ENCODE measurements at regions of chr22 and their contacts with region 1.

Region 1: GRCh38 chr22:41940832-41941765 is 5.9 kb downstream of the CENPM start:
- DNase-seq: peak; percentile 86 to 90 (median 89)
- H3K4me3 ChIP-seq: peak overlapping the region in 1 of 2 donors; percentile 41
- H3K4me3 Mint-ChIP-seq: peak overlapping the region; percentile 66 to 98 (median 92)
- H3K27ac ChIP-seq: peak overlapping the region; percentile 95
- H3K27ac Mint-ChIP-seq: peak overlapping the region; percentile 98 to 100 (median 100)
- H3K4me1 ChIP-seq: peaks cover 40% of the 10 kb centered on the region
- H3K4me1 Mint-ChIP-seq: peaks cover 36 to 61% (median 44%) of the 10 kb centered on the region in 4 donors
- H3K27me3 ChIP-seq: no peaks in the 10 kb centered on the region
- H3K27me3 Mint-ChIP-seq: no peaks in the 10 kb centered on the region

Region 2: DNA sequence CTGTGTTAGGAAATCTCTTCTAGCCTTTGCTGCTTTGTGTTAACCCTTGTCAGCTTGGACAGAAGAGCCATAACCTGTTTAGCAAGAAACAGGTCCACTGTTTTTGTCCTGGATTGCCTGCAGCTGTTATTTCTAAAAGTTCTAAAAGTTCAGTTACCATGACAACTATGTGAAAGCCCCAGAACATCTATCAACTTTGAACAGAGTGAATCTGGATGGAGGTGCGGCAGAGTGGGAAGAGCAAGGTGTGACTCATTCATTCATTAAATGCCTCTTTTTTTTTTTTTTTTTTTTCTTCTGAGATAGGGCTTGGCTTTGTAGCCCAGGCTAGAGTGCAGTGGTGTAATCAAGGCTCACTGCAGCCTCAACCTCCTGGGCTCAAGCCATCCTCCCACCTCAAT is 939.4 kb before region 1 on chr22:
- CTCF ChIA-PET with region 1: no interaction called
- POLR2A ChIA-PET with region 1: no interaction called
- intact Hi-C with region 1: no loop called
- DNase-seq: no peak
- H3K4me3 ChIP-seq: no peak overlapping the region
- H3K4me3 Mint-ChIP-seq: no peak overlapping the region
- H3K27ac ChIP-seq: no peak overlapping the region
- H3K27ac Mint-ChIP-seq: no peak overlapping the region
- H3K4me1 ChIP-seq: no peaks in the 10 kb centered on the region
- H3K4me1 Mint-ChIP-seq: no peaks in the 10 kb centered on the region
- H3K27me3 ChIP-seq: no peaks in the 10 kb centered on the region
- H3K27me3 Mint-ChIP-seq: no peaks in the 10 kb centered on the region

Region 3: GRCh38 chr22:41656556-41656955 is 284.5 kb before region 1 on chr22:
- CTCF ChIA-PET with region 1: no interaction called
- POLR2A ChIA-PET with region 1: no interaction called
- intact Hi-C with region 1: no loop called
- DNase-seq: no peak
- H3K4me3 ChIP-seq: no peak overlapping the region
- H3K4me3 Mint-ChIP-seq: no peak overlapping the region
- H3K27ac ChIP-seq: no peak overlapping the region
- H3K27ac Mint-ChIP-seq: peak overlapping the region in 1 of 7 donors; percentile 48
- H3K4me1 ChIP-seq: no peaks in the 10 kb centered on the region
- H3K4me1 Mint-ChIP-seq: peaks cover 0 to 2% (median 0%) of the 10 kb centered on the region in 4 donors
- H3K27me3 ChIP-seq: no peaks in the 10 kb centered on the region
- H3K27me3 Mint-ChIP-seq: no peaks in the 10 kb centered on the region

Region 4: GRCh38 chr22:41666661-41667258 is 274.3 kb before region 1 on chr22:
- CTCF ChIA-PET with region 1: interaction called, 24 read pairs
- POLR2A ChIA-PET with region 1: interaction called, 21 read pairs
- intact Hi-C with region 1: no loop called
- DNase-seq: peak; percentile 91 to 97 (median 96)
- H3K4me3 ChIP-seq: peak overlapping the region in 1 of 2 donors; percentile 39
- H3K4me3 Mint-ChIP-seq: peak overlapping the region; percentile 86 to 94 (median 88)
- H3K27ac ChIP-seq: peak overlapping the region; percentile 80
- H3K27ac Mint-ChIP-seq: peak overlapping the region; percentile 97 to 99 (median 98)
- H3K4me1 ChIP-seq: peaks cover 14% of the 10 kb centered on the region
- H3K4me1 Mint-ChIP-seq: peaks cover 4 to 14% (median 11%) of the 10 kb centered on the region in 4 donors
- H3K27me3 ChIP-seq: no peaks in the 10 kb centered on the region
- H3K27me3 Mint-ChIP-seq: no peaks in the 10 kb centered on the region

Region 5: GRCh38 chr22:41697126-41697775 is 243.8 kb before region 1 on chr22:
- CTCF ChIA-PET with region 1: interaction called, 143 read pairs
- POLR2A ChIA-PET with region 1: interaction called, 73 read pairs
- intact Hi-C with region 1: loop called (anchors 1 kb)
- DNase-seq: peak; percentile 81 to 87 (median 83)
- H3K4me3 ChIP-seq: no peak overlapping the region
- H3K4me3 Mint-ChIP-seq: peak overlapping the region; percentile 50 to 84 (median 74)
- H3K27ac ChIP-seq: peak overlapping the region; percentile 2
- H3K27ac Mint-ChIP-seq: peak overlapping the region in 6 of 7 donors; percentile 51 to 88 (median 80)
- H3K4me1 ChIP-seq: peaks cover 14% of the 10 kb centered on the region
- H3K4me1 Mint-ChIP-seq: peaks cover 9 to 21% (median 13%) of the 10 kb centered on the region in 4 donors
- H3K27me3 ChIP-seq: no peaks in the 10 kb centered on the region
- H3K27me3 Mint-ChIP-seq: no peaks in the 10 kb centered on the region

Region 6: GRCh38 chr22:41800348-41801146 is 140.6 kb before region 1 on chr22 and contains the start of gene CCDC134:
- CTCF ChIA-PET with region 1: interaction called, 17 read pairs
- POLR2A ChIA-PET with region 1: interaction called, 83 read pairs
- intact Hi-C with region 1: loop called (anchors 1 kb)
- DNase-seq: peak; percentile 89 to 93 (median 93)
- H3K4me3 ChIP-seq: peak within 1 kb of the TSS; percentile 91 to 92
- H3K4me3 Mint-ChIP-seq: peak within 1 kb of the TSS; percentile 91 to 98 (median 96)
- H3K27ac ChIP-seq: peak within 1 kb of the TSS; percentile 85
- H3K27ac Mint-ChIP-seq: peak within 1 kb of the TSS; percentile 90 to 99 (median 98)
- H3K4me1 ChIP-seq: peaks cover 37% of the 10 kb centered on the region
- H3K4me1 Mint-ChIP-seq: peaks cover 20 to 53% (median 34%) of the 10 kb centered on the region in 4 donors
- H3K27me3 ChIP-seq: no peaks in the 10 kb centered on the region
- H3K27me3 Mint-ChIP-seq: no peaks in the 10 kb centered on the region
- total RNA-seq, gene CCDC134: 23.2 to 27.8 TPM

Region 7: DNA sequence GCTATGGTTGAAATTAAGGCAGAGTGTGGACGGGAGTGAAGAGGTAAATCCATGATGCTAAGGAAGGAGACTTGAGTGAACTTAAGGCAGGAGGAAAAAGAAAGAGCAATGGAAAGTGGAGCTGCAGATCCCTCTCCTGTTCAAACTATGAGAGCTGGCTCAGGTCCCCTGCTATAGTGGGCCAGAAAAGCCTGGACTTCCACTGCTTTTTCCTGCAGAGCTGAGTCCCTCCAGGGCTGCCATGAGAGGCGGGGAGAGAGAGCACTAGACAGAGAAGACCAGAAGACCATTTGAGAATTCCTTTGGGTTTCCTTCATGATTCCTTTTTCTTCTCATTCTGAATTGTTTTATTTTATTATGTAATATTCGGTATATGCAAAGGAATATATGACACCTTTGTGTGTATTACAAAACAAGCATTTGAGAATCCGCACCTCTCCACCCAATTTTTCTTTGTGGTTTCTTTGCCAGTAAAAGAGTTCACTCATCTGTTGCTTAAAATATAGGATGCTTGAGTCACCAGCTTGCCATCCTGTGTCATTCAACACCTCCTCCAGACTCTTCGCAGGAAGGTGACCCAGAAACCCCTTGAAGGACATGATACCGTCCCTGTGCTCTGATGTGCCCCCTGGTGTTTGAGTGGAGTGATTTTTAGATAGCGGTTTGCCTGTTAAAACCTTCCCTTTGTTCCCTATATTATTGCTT is 83.8 kb before region 1 on chr22:
- CTCF ChIA-PET with region 1: interaction called, 39 read pairs
- POLR2A ChIA-PET with region 1: interaction called, 54 read pairs
- intact Hi-C with region 1: loop called (anchors 1 kb)
- DNase-seq: peak; percentile 71 to 89 (median 72)
- H3K4me3 ChIP-seq: no peak overlapping the region
- H3K4me3 Mint-ChIP-seq: peak overlapping the region in 7 of 8 donors; percentile 0 to 64 (median 47)
- H3K27ac ChIP-seq: peak overlapping the region; percentile 40
- H3K27ac Mint-ChIP-seq: peak overlapping the region; percentile 71 to 96 (median 86)
- H3K4me1 ChIP-seq: peaks cover 53% of the 10 kb centered on the region
- H3K4me1 Mint-ChIP-seq: peaks cover 29 to 59% (median 44%) of the 10 kb centered on the region in 4 donors
- H3K27me3 ChIP-seq: no peaks in the 10 kb centered on the region
- H3K27me3 Mint-ChIP-seq: no peaks in the 10 kb centered on the region

Region 8: DNA sequence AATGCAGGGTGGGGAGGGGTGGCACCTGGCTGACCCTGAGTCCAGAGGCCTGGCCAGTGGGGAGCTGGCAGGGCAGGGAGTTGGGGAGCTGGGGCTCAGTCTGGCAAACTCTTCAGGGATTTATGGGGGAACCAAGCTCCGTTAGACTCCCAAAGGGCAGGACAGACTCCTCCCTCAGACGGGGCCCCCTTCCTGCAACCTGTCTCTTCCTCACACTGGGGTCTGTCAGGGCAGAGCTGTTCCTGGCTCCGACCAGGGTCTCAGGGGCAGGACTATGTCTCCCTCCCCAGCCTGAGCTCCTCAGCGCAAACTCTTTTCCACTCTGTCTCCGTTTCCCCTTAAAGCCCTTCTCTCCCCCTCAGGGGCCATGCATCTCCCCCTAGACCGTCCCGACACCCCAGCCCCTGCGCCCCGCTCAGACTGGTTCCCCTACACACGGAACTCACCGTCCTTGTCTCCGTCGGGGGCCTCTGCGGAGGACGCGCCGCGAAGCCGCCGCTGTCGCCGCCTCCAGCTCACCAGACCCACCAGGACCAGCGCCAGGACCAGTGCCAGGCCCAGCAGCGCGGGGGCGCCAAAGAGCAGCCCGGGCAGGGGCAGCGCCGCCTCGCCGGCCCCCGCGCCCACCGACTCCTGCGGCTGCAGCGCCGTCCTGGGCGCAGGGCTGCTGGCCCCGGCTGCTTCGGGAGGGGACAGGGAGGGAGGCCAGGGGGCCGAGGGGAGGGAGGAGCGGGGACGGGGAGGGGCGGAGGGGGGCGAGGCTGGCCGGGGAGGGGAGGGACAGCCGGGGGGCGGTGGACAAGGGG is 15.2 kb before region 1 on chr22:
- CTCF ChIA-PET with region 1: interaction called, 115 read pairs
- POLR2A ChIA-PET with region 1: interaction called, 223 read pairs
- intact Hi-C with region 1: loop called (anchors 1 kb)
- DNase-seq: peak; percentile 73 to 82 (median 77)
- H3K4me3 ChIP-seq: peak overlapping the region in 1 of 2 donors; percentile 43
- H3K4me3 Mint-ChIP-seq: peak overlapping the region; percentile 73 to 87 (median 82)
- H3K27ac ChIP-seq: no peak overlapping the region
- H3K27ac Mint-ChIP-seq: peak overlapping the region; percentile 57 to 83 (median 71)
- H3K4me1 ChIP-seq: peaks cover 15% of the 10 kb centered on the region
- H3K4me1 Mint-ChIP-seq: peaks cover 3 to 25% (median 9%) of the 10 kb centered on the region in 4 donors
- H3K27me3 ChIP-seq: no peaks in the 10 kb centered on the region
- H3K27me3 Mint-ChIP-seq: no peaks in the 10 kb centered on the region